B cell (primary cell): ENCODE measurements at regions of chr11 and their contacts with region 1.

Region 1: GRCh38 chr11:18634140-18635032 is at the start of gene SPTY2D1:
- DNase-seq: peak; percentile 98
- ATAC-seq: peak; percentile 95
- H3K4me3 ChIP-seq: peak within 1 kb of the TSS; percentile 64 to 95 (median 91)
- H3K4me3 Mint-ChIP-seq: peak within 1 kb of the TSS; percentile 99
- H3K27ac ChIP-seq: peak within 1 kb of the TSS; percentile 75 to 97
- H3K27ac Mint-ChIP-seq: peak within 1 kb of the TSS; percentile 98
- H3K4me1 ChIP-seq: peaks cover 14 to 16% of the 10 kb centered on the region in 2 donors
- H3K4me1 Mint-ChIP-seq: peaks cover 23% of the 10 kb centered on the region
- H3K27me3 ChIP-seq: no peaks in the 10 kb centered on the region
- H3K27me3 Mint-ChIP-seq: peaks cover 8% of the 10 kb centered on the region
- CTCF ChIP-seq: no peak
- total RNA-seq, gene SPTY2D1: 16.5 and 17.8 TPM in 2 replicates

Region 2: GRCh38 chr11:18105802-18106574 is 528.4 kb before region 1 on chr11 and contains the start of gene SAAL1:
- CTCF ChIA-PET with region 1: no interaction called
- POLR2A ChIA-PET with region 1: no interaction called
- intact Hi-C with region 1: loop called (anchors 1 kb)
- DNase-seq: peak; percentile 91
- ATAC-seq: peak; percentile 98
- H3K4me3 ChIP-seq: peak within 1 kb of the TSS; percentile 70 to 99 (median 82)
- H3K4me3 Mint-ChIP-seq: peak within 1 kb of the TSS; percentile 95
- H3K27ac ChIP-seq: peak within 1 kb of the TSS; percentile 65 to 91
- H3K27ac Mint-ChIP-seq: peak within 1 kb of the TSS; percentile 90
- H3K4me1 ChIP-seq: peaks cover 15 to 17% of the 10 kb centered on the region in 2 donors
- H3K4me1 Mint-ChIP-seq: peaks cover 28% of the 10 kb centered on the region
- H3K27me3 ChIP-seq: peaks cover 0 to 4% (median 1%) of the 10 kb centered on the region in 4 experiments
- H3K27me3 Mint-ChIP-seq: peaks cover 19% of the 10 kb centered on the region
- CTCF ChIP-seq: peak; percentile 89
- total RNA-seq, gene SAAL1: 35.2 and 37.8 TPM in 2 replicates

Region 3: GRCh38 chr11:18501629-18502028 is 132.8 kb before region 1 on chr11:
- CTCF ChIA-PET with region 1: no interaction called
- POLR2A ChIA-PET with region 1: no interaction called
- intact Hi-C with region 1: no loop called
- DNase-seq: no peak
- ATAC-seq: no peak
- H3K4me3 ChIP-seq: no peak overlapping the region
- H3K4me3 Mint-ChIP-seq: no peak overlapping the region
- H3K27ac ChIP-seq: no peak overlapping the region
- H3K27ac Mint-ChIP-seq: no peak overlapping the region
- H3K4me1 ChIP-seq: no peaks in the 10 kb centered on the region
- H3K4me1 Mint-ChIP-seq: no peaks in the 10 kb centered on the region
- H3K27me3 ChIP-seq: no peaks in the 10 kb centered on the region
- H3K27me3 Mint-ChIP-seq: no peaks in the 10 kb centered on the region
- CTCF ChIP-seq: no peak

Region 4: GRCh38 chr11:18588297-18589252 is 45.8 kb before region 1 on chr11 and contains the start of gene UEVLD:
- CTCF ChIA-PET with region 1: interaction called, 3 read pairs
- POLR2A ChIA-PET with region 1: interaction called, 5 read pairs
- intact Hi-C with region 1: loop called (anchors 1 kb)
- DNase-seq: peak; percentile 73
- ATAC-seq: peak; percentile 87
- H3K4me3 ChIP-seq: peak within 1 kb of the TSS; percentile 92 to 97 (median 96)
- H3K4me3 Mint-ChIP-seq: no peak within 1 kb of the TSS
- H3K27ac ChIP-seq: peak within 1 kb of the TSS; percentile 41 to 78
- H3K27ac Mint-ChIP-seq: no peak within 1 kb of the TSS
- H3K4me1 ChIP-seq: peaks cover 13 to 17% of the 10 kb centered on the region in 2 donors
- H3K4me1 Mint-ChIP-seq: peaks cover 3% of the 10 kb centered on the region
- H3K27me3 ChIP-seq: no peaks in the 10 kb centered on the region
- H3K27me3 Mint-ChIP-seq: no peaks in the 10 kb centered on the region
- CTCF ChIP-seq: no peak
- total RNA-seq, gene UEVLD: 12.4 and 12.8 TPM in 2 replicates

Region 5: GRCh38 chr11:18698341-18699268 is 64.2 kb after region 1 on chr11 and contains the start of gene TMEM86A:
- CTCF ChIA-PET with region 1: no interaction called
- POLR2A ChIA-PET with region 1: no interaction called
- intact Hi-C with region 1: loop called (anchors 1 kb)
- DNase-seq: peak; percentile 89
- ATAC-seq: peak; percentile 99
- H3K4me3 ChIP-seq: peak within 1 kb of the TSS; percentile 37 to 71 (median 60)
- H3K4me3 Mint-ChIP-seq: peak within 1 kb of the TSS; percentile 90
- H3K27ac ChIP-seq: peak within 1 kb of the TSS in 1 of 2 donors; percentile 32
- H3K27ac Mint-ChIP-seq: peak within 1 kb of the TSS; percentile 48
- H3K4me1 ChIP-seq: peaks cover 13 to 17% of the 10 kb centered on the region in 2 donors
- H3K4me1 Mint-ChIP-seq: peaks cover 18% of the 10 kb centered on the region
- H3K27me3 ChIP-seq: peaks cover 0 to 17% (median 0%) of the 10 kb centered on the region in 4 experiments
- H3K27me3 Mint-ChIP-seq: peaks cover 16% of the 10 kb centered on the region
- CTCF ChIP-seq: no peak
- total RNA-seq, gene TMEM86A: 0.58 and 1.1 TPM in 2 replicates

Region 6: DNA sequence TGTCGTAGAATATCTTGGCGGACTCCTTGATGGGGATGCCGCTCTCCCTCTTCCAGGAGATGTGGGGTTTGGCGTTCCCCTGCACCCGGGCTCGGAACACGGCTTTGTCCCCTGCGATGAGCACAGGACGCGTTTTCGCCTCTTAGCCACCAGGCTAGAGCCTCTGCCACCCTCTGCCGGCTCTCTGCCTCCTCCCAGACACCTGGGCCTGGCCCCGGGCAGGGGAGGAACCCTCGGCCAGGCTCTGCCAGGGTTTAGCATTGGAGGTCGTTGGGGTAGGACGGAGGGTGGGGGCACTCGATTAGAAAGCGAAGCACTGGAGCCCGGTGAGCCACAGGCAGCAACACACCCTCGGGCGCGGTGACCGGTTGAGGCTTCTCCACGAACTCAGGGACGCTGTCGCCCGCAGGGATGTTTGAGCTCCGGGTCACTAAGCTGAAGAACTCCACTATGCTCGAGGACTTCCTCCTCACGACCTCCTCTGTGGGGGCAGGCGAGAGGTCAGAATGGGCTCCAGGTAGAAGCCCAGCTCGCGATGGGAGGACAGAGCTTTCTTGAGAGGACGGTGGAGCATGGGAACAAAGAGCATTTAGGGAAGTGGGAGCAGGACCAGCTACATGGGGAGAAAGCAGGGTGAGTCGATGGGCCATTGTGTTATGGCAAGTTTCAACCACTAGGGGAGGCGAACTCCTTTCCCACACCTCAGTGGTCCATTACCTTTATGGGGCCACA is 87.3 kb after region 1 on chr11:
- CTCF ChIA-PET with region 1: interaction called, 11 read pairs
- POLR2A ChIA-PET with region 1: interaction called, 3 read pairs
- intact Hi-C with region 1: loop called (anchors 5 kb)
- DNase-seq: peak; percentile 77
- ATAC-seq: peak; percentile 66
- H3K4me3 ChIP-seq: peak overlapping the region; percentile 24 to 80 (median 69)
- H3K4me3 Mint-ChIP-seq: peak overlapping the region; percentile 92
- H3K27ac ChIP-seq: peak overlapping the region in 1 of 2 donors; percentile 11
- H3K27ac Mint-ChIP-seq: peak overlapping the region; percentile 42
- H3K4me1 ChIP-seq: peaks cover 9 to 17% of the 10 kb centered on the region in 2 donors
- H3K4me1 Mint-ChIP-seq: peaks cover 9% of the 10 kb centered on the region
- H3K27me3 ChIP-seq: no peaks in the 10 kb centered on the region
- H3K27me3 Mint-ChIP-seq: peaks cover 6% of the 10 kb centered on the region
- CTCF ChIP-seq: peak; percentile 88

Region 7: DNA sequence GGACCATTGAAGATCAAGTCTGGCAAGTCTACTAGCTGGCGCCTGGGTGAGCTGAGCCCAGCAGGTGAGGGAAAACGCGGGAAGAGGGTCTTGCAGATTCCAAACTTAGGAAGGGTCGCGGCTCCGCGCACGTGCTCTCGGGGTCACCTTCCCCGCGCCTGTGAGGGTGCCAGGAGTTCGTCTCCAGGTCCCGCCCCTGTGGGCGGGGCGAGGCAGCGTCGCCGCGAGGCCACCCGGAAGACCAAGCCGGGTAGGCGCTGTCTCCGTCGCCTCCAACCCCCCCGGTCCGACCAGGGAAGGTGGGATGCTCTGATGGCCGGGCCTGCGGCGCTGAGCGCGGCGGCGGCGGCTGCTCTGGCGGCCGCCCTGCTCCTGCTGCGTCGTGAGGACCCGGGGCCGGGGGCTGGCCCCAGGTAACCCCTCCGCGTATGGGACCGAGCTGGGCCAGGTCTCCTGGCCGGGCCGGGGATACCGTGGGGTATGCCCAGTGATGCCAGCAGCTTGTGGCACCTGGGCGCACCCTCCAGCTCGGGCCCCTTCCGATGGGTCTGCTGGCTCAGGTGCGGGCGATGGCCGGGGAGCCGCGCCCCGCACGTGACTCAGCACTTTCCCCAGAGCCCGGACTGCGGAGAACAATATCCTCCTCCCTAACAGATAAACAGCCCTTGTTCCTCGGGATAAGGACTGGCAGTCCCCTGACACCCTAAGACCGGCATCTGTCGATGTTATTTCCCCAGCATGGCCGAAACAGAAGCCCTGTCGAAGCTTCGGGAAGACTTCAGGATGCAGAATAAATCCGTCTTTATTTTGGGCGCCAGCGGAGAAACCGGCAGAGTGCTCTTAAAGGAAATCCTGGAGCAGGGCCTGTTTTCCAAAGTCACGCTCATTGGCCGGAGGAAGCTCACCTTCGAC is 1729.4 kb after region 1 on chr11 and contains the start of gene HTATIP2:
- CTCF ChIA-PET with region 1: no interaction called
- POLR2A ChIA-PET with region 1: no interaction called
- intact Hi-C with region 1: loop called (anchors 5 kb)
- DNase-seq: peak; percentile 80
- ATAC-seq: peak; percentile 92
- H3K4me3 ChIP-seq: peak within 1 kb of the TSS; percentile 75 to 88 (median 80)
- H3K4me3 Mint-ChIP-seq: peak within 1 kb of the TSS; percentile 88
- H3K27ac ChIP-seq: peak within 1 kb of the TSS; percentile 57 to 82
- H3K27ac Mint-ChIP-seq: peak within 1 kb of the TSS; percentile 89
- H3K4me1 ChIP-seq: peaks cover 22 to 31% of the 10 kb centered on the region in 2 donors
- H3K4me1 Mint-ChIP-seq: peaks cover 57% of the 10 kb centered on the region
- H3K27me3 ChIP-seq: no peaks in the 10 kb centered on the region
- H3K27me3 Mint-ChIP-seq: no peaks in the 10 kb centered on the region
- CTCF ChIP-seq: no peak
- total RNA-seq, gene HTATIP2: 30.6 and 31.2 TPM in 2 replicates